Caki2 (cell line): ENCODE measurements at regions of chr19 and their contacts with region 1.

Region 1: DNA sequence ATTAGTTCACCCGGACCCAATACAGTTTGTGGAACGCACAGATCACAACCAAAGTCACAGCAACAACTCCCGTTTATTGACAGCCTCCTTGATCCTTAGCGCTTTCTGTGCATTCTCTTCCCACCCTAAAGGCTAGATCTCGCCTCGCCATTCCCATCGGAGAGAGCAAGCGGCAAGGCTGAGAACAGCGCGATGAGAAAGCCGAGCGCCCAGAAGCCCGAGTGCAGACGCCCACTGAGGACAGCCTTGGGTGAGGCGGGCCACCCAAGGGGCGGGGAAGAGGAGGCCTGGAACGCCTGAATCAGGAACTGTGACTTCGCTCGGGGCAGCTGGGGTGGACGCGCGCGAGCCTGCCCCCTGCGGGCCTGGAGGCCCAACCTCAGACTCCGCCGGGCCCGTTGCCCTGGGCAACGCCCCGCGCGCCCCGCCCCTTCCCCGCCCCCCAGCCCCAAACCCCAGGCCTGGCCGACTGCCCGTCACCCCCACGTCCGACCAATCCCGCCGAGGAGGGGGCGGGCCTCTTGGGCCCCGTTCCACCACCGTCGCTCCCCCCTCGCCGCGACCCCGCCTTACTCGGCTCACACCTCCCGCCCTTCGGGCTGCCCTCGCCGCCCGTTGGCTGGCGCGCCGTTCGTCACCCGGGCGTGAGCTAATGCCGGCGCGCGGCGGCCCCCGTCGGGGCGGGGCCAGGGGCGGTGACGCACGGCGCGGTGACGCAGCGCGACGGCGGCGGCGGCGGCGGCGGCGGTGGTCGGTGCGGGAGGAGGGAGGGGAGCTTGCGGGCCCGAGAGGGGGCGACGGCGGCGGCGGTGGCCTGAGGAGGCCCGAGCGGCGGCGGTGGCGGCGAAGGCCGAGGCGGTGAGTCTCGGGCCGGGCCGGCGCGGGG is at the start of gene SAMD4B:
- DNase-seq: peak; percentile 97
- total RNA-seq, gene SAMD4B: 39.6 and 63.2 TPM in 2 replicates

Region 2: DNA sequence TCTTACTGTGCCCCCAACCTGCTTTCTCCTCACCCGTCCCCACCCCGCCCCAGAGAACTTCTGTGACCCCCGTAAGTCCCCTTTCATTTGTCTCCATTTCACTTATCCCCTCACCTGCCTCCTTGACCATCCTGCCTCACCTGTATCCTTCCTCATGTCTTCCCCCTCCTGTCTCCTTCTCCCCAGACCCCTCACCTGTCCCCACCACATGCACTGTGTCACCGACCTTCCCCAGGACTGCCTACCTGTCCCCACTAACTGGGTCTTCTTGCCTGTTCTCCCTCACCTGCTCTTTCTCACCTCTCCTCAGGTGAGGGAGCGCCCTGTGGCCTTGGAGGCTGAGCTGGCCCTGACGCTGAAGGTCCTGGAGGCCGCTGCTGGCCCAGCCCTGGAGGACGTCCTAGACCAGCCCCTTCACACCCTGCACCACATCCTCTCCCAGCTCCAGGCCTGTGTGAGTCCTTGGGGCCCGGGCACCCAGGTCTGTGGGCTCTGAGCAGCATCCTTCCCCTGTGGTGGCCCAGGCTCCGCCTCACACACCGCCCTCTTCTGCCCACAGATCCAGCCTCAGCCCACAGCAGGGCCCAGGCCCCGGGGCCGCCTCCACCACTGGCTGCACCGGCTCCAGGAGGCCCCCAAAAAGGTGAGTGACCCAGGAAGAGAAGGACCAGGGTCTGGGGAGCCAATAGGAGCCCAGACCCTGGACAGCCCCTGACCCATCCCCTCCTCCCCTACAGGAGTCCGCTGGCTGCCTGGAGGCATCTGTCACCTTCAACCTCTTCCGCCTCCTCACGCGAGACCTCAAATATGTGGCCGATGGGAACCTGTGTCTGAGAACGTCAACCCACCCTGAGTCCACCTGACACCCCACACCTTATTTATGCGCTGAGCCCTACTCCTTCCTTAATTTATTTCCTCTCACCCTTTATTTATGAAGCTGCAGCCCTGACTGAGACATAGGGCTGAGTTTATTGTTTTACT is 44.0 kb before region 1 on chr19:
- in situ Hi-C with region 1: no loop called
- DNase-seq: no peak

Region 3: GRCh38 chr19:39390755-39391592 is 49.0 kb after region 1 on chr19 and contains the starts of genes MED29 and PAF1:
- in situ Hi-C with region 1: loop called (anchors 5 kb)
- DNase-seq: peak; percentile 100
- total RNA-seq, gene MED29: 76.2 and 86.5 TPM in 2 replicates
- total RNA-seq, gene PAF1: 77.5 and 79.9 TPM in 2 replicates